ENCODE measurements at regions of chr1 and their contacts with region 1.

Region 1: DNA sequence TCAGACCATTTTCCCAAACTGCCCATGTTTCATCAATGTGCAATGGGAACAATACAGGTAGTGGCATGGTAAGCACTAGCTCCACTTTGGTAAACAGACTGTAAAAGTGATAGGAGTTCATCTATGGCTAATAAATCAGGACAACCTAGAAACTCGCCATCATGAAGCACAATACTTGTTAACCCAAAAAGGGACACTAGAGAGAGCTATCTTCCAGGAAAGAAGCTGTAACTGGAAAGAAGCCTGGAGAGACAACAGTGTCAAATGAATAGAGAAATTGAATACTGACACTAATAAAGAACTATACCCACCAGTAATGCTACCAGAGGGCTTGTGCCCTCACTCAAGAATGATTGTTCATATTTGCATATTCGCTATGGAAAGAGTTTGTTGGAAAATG is 164.7 kb upstream of the RGS18 start:
- DNase-seq: no peak
- ATAC-seq: no peak
- H3K4me3 ChIP-seq: no peak overlapping the region
- H3K27ac ChIP-seq: no peak overlapping the region
- H3K4me1 ChIP-seq: no peaks in the 10 kb centered on the region
- H3K27me3 ChIP-seq: no peaks in the 10 kb centered on the region
- CTCF ChIP-seq: peak in 5 of 12 donors; percentile 16 to 41 (median 23)
- POLR2A ChIP-seq: no peak

Region 2: DNA sequence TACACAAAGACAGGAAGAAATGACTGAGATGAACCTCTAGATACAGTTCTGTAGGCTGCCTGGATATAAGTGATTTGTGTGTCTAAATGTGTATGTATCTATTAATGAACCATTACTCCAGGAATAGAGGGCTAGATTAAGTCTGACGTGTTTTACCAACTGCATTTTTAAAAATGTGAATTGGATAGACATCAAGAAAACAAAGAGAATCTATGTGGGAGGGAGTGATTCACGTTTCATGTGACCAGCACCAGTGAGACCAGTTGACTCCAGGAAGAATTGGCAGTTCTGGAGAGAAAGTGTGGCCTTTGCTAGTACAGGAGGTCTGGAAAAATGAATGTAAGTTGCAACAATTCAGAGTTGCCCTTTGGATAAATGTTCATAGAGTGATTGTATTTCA is 269.9 kb after region 1 on chr1:
- intact Hi-C with region 1: no loop called
- DNase-seq: no peak
- ATAC-seq: no peak
- H3K4me3 ChIP-seq: no peak overlapping the region
- H3K27ac ChIP-seq: no peak overlapping the region
- H3K4me1 ChIP-seq: no peaks in the 10 kb centered on the region
- H3K27me3 ChIP-seq: no peaks in the 10 kb centered on the region
- CTCF ChIP-seq: no peak
- POLR2A ChIP-seq: no peak

Region 3: GRCh38 chr1:192303029-192303428 is 309.5 kb after region 1 on chr1:
- intact Hi-C with region 1: loop called in 1 of 10 experiments (anchors 10 kb)
- DNase-seq: no peak
- ATAC-seq: no peak
- H3K4me3 ChIP-seq: no peak overlapping the region
- H3K27ac ChIP-seq: no peak overlapping the region
- H3K4me1 ChIP-seq: no peaks in the 10 kb centered on the region
- H3K27me3 ChIP-seq: no peaks in the 10 kb centered on the region
- CTCF ChIP-seq: no peak
- POLR2A ChIP-seq: no peak

Region 4: GRCh38 chr1:192311281-192311680 is 317.7 kb after region 1 on chr1:
- intact Hi-C with region 1: loop called in 2 of 10 experiments (anchors 10 kb)
- DNase-seq: no peak
- ATAC-seq: no peak
- H3K4me3 ChIP-seq: no peak overlapping the region
- H3K27ac ChIP-seq: no peak overlapping the region
- H3K4me1 ChIP-seq: no peaks in the 10 kb centered on the region
- H3K27me3 ChIP-seq: no peaks in the 10 kb centered on the region
- CTCF ChIP-seq: peak in 10 of 12 donors; percentile 19 to 60 (median 42)
- POLR2A ChIP-seq: no peak

Region 5: DNA sequence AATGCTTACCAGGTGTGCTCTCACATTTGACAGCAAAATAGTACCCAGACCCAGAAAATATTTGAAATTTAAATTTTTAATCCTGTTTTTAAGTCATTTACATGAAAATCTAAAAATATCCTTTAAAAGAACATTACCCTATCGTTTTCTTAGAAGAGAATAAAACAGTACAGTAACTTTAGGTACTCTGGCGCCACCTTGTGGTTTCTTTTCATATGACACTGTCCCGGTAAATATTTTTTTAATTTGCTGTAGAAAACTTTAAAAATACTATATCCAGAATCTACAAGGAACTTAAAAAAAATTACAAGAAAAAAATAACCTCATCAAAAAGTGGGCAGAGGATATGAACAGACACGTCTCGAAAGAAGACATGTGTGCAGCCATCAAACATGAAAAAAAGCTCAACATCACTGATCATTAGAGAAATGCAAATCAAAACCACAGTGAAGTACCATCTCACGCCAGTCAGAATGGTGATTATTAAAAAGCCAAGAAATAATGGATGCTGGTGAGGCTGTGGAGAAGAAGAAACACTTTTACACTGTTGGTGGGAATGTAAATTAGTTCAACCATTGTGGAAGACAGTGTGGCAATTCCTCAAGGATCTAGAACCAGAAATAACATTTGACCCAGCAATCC is 452.4 kb after region 1 on chr1:
- intact Hi-C with region 1: loop called in 5 of 10 experiments (anchors 5 to 10 kb)
- DNase-seq: peak in 4 of 5 donors; percentile 22 to 28 (median 25)
- ATAC-seq: no peak
- H3K4me3 ChIP-seq: peak overlapping the region in 2 of 12 donors; percentile 16 to 22
- H3K27ac ChIP-seq: no peak overlapping the region
- H3K4me1 ChIP-seq: peaks cover 0 to 3% (median 0%) of the 10 kb centered on the region in 12 donors
- H3K27me3 ChIP-seq: peaks cover 0 to 8% (median 0%) of the 10 kb centered on the region in 9 donors
- CTCF ChIP-seq: peak; percentile 80 to 98 (median 84)
- POLR2A ChIP-seq: no peak